ENCODE measurements at regions of chr13 and their contacts with region 1.

Region 1: DNA sequence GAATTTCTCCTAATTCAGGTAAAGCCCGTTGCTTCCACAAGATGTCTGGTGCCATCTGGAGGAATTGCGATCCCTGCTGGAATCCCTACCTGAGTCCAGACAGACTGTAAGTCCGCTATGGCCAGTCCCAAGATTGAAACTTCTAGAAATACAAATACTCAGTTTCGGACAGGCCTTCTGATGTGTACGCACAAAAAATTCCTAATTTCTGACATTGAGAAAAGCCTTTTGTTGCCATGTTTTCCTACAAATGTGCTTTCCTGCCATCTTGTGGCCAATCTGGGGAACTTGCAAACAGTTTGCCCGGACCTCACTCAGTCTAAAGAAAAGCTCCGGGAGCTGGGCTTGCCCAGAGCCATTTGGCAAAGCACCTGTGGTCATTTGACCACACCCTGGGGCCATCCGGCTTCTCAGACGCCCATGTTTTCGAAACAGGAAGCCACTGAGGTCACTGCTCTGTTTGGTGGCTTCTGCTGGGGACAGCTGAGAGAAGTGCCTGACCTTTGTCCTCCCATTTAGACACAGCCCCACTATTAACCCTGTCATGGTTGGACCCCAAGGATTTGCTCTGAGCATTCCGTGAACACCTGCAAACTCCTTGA is 79.4 kb downstream of the SLC15A1 start:
- DNase-seq: peak; percentile 76
- ATAC-seq: peak; percentile 76

Region 2: GRCh38 chr13:97855570-97856303 is 817.3 kb before region 1 on chr13:
- intact Hi-C with region 1: loop called (anchors 5 kb)
- DNase-seq: peak; percentile 72
- ATAC-seq: peak; percentile 75

Region 3: DNA sequence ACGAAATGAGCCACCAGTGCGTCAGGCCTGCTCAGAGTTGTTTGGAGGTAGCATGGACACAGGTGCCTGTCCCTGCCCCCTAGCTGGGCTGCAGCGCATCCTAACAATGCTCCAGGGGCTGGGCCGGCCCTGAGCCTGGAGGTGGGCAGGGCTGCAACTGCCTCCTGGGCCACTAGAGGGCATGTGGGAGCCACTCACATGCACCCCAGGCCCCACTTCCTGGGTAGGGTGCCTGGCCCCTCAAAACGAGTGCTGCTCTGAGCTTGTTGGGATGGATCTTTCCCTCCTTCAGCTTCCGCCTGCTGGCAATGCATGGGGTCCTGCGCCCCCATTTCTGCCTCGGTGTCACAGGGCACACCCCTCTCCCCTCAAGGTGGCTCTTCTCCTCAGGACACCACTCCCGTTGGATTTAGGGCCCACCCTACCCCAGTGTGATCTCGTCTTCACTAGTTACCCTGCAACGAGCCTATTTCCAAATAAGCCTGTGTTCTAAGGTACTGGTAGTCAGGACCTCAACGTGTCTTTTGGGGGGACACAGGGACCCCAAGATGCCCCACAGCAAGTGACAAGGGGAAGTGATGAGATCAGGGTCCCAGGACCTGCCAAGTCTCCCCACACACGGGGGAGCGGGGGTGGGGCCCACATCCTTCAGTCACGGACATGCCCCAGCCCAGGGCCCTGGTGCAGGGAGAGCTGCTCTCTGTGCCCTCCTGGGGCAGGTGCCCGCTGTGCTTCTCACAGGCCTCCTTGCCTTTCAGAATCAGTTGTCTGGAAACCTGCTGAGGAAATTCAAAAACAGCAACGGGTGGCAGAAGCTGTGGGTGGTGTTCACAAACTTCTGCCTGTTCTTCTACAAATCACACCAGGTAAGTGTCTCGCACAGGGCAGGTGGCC is 227.5 kb before region 1 on chr13:
- intact Hi-C with region 1: loop called (anchors 1 kb)
- DNase-seq: no peak
- ATAC-seq: peak; percentile 84

Region 4: DNA sequence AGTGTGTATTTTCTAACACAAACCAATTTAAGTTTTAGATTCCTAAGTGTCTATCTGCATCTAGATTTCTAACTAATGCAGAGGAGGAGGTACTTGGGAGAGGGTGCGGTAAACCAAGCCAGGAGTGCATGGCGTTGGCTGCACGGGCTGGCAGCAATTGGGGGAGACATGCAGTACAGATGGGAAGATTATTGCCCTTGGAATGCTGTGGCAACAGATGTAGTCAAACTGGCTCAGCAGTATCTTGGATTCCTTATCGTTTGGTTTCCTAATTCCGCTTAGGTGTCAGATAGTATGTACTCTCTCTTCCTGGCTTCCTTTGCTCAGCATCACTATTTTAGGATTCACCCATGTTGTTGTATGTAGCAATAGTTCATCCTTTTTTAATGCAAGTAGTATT is 66.7 kb before region 1 on chr13:
- intact Hi-C with region 1: no loop called
- DNase-seq: no peak
- ATAC-seq: peak; percentile 57

Region 5: GRCh38 chr13:98798849-98799645 is 126.0 kb after region 1 on chr13:
- intact Hi-C with region 1: no loop called
- DNase-seq: no peak
- ATAC-seq: no peak

Region 6: GRCh38 chr13:98842864-98843481 is 169.9 kb after region 1 on chr13:
- intact Hi-C with region 1: loop called (anchors 2 kb)
- DNase-seq: peak; percentile 76
- ATAC-seq: peak; percentile 80